Heart right ventricle (tissue), 16 donors: ENCODE measurements at regions of chr3 and their contacts with region 1.

Region 1: GRCh38 chr3:194315088-194315964 is 35.8 kb downstream of the CPN2 start:
- DNase-seq: peak; percentile 85 to 89
- ATAC-seq: peak; percentile 84 to 92 (median 90)
- H3K4me3 ChIP-seq: peak overlapping the region in 9 of 10 donors; percentile 8 to 62 (median 52)
- H3K27ac ChIP-seq: peak overlapping the region in 6 of 10 donors; percentile 6 to 48 (median 34)
- H3K4me1 ChIP-seq: peaks cover 6 to 37% (median 25%) of the 10 kb centered on the region in 9 donors
- H3K27me3 ChIP-seq: peaks cover 0 to 67% (median 56%) of the 10 kb centered on the region in 7 donors
- CTCF ChIP-seq: peak; percentile 91 to 99 (median 97)

Region 2: DNA sequence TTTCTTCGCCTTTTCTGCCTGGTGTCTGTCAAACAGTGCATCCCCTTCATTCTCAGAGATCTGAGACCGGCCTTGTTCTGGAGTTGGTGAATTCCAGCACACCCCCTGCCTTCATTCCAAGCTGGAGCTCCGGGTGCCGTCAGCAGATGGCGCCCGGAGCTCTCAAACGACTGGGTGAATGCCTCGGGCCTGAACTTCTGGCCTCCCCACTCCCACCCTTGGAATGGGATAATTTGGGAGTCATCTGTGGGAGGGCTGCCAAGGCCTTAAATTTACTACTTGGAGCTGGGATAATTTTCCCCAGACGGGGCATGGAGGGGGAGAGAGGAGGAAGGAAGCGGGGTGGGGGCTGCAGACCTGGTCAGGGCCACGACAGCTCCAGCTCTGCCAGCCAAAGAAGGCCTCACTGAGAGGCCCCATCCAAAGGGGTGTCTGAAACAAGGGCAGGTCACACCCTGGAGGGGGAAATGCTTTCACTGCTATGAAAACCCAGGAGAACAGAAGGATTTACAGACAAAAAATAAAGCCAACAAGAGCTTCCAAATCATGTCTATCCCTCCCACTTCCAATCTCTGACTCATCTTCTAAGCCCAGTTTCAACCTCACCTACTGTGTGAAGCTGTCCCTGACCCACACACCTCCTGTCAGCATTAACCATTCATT is 534.4 kb before region 1 on chr3:
- intact Hi-C with region 1: loop called in 8 of 10 experiments (anchors 1 to 5 kb)
- DNase-seq: peak; percentile 72 to 75
- ATAC-seq: peak; percentile 85 to 95 (median 92)
- H3K4me3 ChIP-seq: no peak overlapping the region
- H3K27ac ChIP-seq: no peak overlapping the region
- H3K4me1 ChIP-seq: peaks cover 3 to 22% (median 8%) of the 10 kb centered on the region in 9 donors
- H3K27me3 ChIP-seq: peaks cover 4 to 81% (median 59%) of the 10 kb centered on the region in 7 donors
- CTCF ChIP-seq: peak; percentile 70 to 93 (median 80)

Region 3: GRCh38 chr3:194003125-194004057 is 311.9 kb before region 1 on chr3:
- intact Hi-C with region 1: loop called in 6 of 10 experiments (anchors 10 kb)
- DNase-seq: peak; percentile 92
- ATAC-seq: peak; percentile 90 to 96 (median 94)
- H3K4me3 ChIP-seq: peak overlapping the region in 8 of 10 donors; percentile 26 to 52 (median 47)
- H3K27ac ChIP-seq: peak overlapping the region; percentile 23 to 85 (median 74)
- H3K4me1 ChIP-seq: peaks cover 13 to 48% (median 29%) of the 10 kb centered on the region in 9 donors
- H3K27me3 ChIP-seq: peaks cover 0 to 33% (median 8%) of the 10 kb centered on the region in 7 donors
- CTCF ChIP-seq: peak in 1 of 9 donors; percentile 21

Region 4: DNA sequence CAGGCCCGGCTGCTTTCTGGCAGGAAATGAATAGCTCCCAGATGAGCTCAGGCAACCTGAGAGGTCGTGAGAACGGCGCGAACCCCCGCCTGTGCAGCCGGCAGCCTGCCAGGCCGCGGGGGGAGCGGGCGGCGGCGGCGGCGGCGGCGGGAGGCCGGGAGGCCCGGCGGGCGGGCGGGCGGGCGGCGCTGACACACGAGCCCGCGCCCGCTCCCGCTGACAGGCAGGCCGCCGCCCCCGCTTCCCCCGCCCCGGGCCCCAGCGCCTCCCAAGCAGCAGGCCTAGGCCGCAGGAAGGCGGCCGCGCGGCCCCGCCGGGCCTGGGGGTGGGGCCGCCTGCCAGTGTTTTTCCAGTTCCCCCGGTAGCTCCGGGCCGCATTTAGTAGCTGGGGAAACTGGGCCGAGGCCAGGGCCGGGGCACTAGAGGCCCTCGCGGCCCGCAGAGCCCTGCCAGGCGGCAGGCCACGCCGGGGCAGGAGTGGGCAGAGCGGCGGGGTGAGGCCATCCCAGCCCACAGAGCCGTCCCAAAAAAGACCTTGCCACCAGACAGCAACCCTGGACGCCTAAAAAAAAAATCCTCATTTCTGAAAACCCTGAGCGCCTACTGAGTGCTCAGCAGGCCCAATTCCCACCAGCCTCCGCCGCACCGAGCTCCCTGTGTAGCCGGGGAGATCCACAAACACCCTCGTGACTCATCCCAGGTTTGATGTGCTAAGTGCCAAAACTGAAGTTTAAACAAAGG is 173.7 kb before region 1 on chr3:
- intact Hi-C with region 1: loop called in 9 of 10 experiments (anchors 2 to 5 kb)
- DNase-seq: peak; percentile 93
- ATAC-seq: peak; percentile 66 to 89 (median 76)
- H3K4me3 ChIP-seq: peak overlapping the region in 8 of 10 donors; percentile 26 to 57 (median 52)
- H3K27ac ChIP-seq: peak overlapping the region; percentile 91 to 97 (median 94)
- H3K4me1 ChIP-seq: peaks cover 18 to 61% (median 47%) of the 10 kb centered on the region in 9 donors
- H3K27me3 ChIP-seq: peaks cover 0 to 76% (median 0%) of the 10 kb centered on the region in 7 donors
- CTCF ChIP-seq: peak in 3 of 9 donors; percentile 19 to 34 (median 24)

Region 5: DNA sequence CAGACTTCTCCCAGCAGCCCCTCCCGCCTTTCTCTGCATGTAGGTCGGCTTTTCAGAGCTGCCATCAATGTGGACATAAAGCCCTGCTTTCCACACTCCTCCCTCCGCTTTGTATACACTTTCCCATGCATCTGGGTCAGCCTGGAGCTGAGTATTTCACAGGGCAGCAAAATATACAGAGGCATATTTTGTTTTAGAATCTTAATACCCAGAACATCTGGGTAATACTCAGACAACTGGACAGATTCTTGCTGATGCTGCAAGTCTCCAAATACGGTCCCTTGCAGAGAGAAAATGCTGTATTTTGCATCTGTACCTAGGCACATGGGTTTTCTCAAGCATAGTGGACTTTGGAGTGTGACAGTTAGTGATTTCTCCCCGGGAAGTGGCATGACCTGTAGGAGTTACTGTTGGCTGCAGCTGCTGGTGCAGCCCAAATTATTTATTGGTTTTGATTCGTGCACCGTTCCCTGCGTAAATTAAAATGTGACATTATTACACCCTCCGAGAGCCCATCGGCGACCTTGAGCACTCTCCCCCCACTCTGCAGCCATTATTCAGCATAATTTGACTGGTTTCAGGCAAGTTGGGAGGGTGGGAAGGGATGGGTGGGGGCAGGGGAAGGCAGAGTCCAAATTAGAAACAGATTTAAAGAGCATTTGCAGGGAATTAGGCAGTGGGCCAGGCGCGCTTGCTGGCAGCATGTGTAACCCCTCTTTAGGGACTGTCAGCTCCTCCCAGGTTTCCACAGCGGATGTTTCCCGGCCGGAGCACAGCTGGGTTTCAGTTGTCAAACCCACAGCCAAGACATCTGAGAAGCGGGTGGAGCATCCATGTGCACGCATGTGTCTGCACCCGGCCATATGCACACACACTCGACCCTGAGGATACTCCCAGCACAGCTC is 65.0 kb before region 1 on chr3:
- intact Hi-C with region 1: loop called in 1 of 10 experiments (anchors 2 kb)
- DNase-seq: peak; percentile 87 to 88
- ATAC-seq: peak; percentile 70 to 81 (median 77)
- H3K4me3 ChIP-seq: peak overlapping the region in 6 of 10 donors; percentile 2 to 21 (median 10)
- H3K27ac ChIP-seq: peak overlapping the region in 2 of 10 donors; percentile 14 to 21
- H3K4me1 ChIP-seq: peaks cover 8 to 55% (median 37%) of the 10 kb centered on the region in 9 donors
- H3K27me3 ChIP-seq: peaks cover 0 to 12% (median 0%) of the 10 kb centered on the region in 7 donors
- CTCF ChIP-seq: no peak